ENCODE measurements at regions of chr5 and their contacts with region 1.

Region 1: DNA sequence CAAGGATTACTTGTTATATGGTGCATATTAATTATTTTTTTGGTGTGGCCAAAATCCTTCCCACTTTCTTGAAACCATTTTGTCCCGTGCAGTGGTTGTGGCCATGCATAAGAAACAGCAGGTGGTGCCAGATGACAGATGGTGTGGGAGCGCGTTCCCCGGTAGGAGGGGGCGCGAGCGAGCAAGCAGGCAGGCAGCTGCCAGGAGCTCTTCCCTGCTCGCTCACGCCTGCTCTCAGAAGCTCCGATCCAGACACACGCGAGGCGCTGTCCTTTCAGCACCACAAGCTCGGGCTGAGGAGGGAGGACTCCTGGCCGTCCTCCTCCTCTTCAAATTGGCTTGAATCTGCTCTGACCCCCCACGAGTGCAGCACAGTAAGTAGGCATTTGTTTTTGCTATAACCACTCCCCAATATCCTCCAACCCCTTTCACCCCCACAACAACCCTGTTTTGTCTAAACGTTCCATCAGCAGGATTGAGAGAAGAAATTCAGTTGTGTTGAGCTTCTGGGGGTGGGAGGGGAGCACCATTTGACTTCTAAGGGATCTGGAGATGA is at the start of gene NSG2:
- DNase-seq: peak; percentile 4
- H3K4me3 ChIP-seq: no peak within 1 kb of the TSS
- H3K27ac ChIP-seq: no peak within 1 kb of the TSS
- H3K4me1 ChIP-seq: no peaks in the 10 kb centered on the region
- H3K27me3 ChIP-seq: peaks cover 0 to 15% (median 0%) of the 10 kb centered on the region in 4 donors
- CTCF ChIP-seq: peak; percentile 40 to 73 (median 52)
- POLR2A ChIP-seq: no peak
- total RNA-seq, gene NSG2: not detected

Region 2: GRCh38 chr5:174245516-174246075 is 200.0 kb after region 1 on chr5:
- intact Hi-C with region 1: no loop called
- DNase-seq: no peak
- H3K4me3 ChIP-seq: no peak overlapping the region
- H3K27ac ChIP-seq: no peak overlapping the region
- H3K4me1 ChIP-seq: no peaks in the 10 kb centered on the region
- H3K27me3 ChIP-seq: peaks cover 0 to 12% (median 0%) of the 10 kb centered on the region in 4 donors
- CTCF ChIP-seq: no peak
- POLR2A ChIP-seq: no peak

Region 3: GRCh38 chr5:174311531-174312269 is 266.2 kb after region 1 on chr5:
- intact Hi-C with region 1: loop called (anchors 5 kb)
- DNase-seq: no peak
- H3K4me3 ChIP-seq: peak overlapping the region; percentile 3 to 65 (median 34)
- H3K27ac ChIP-seq: no peak overlapping the region
- H3K4me1 ChIP-seq: peaks cover 3 to 11% (median 3%) of the 10 kb centered on the region in 3 donors
- H3K27me3 ChIP-seq: peaks cover 0 to 77% (median 0%) of the 10 kb centered on the region in 4 donors
- CTCF ChIP-seq: peak; percentile 58 to 88 (median 84)
- POLR2A ChIP-seq: no peak